ENCODE measurements at regions of chr21 and their contacts with region 1.

Region 1: GRCh38 chr21:44606495-44606894 is 5.4 kb upstream of the KRTAP10-8 start:
- DNase-seq: no peak
- H3K4me3 ChIP-seq: no peak overlapping the region
- H3K27ac ChIP-seq: no peak overlapping the region
- H3K4me1 ChIP-seq: no peaks in the 10 kb centered on the region
- H3K27me3 ChIP-seq: peaks cover 1 to 3% of the 10 kb centered on the region in 2 experiments
- CTCF ChIP-seq: no peak
- POLR2A ChIP-seq: no peak

Region 2: GRCh38 chr21:44564886-44565598 is 41.5 kb before region 1 on chr21:
- CTCF ChIA-PET with region 1: no interaction called
- POLR2A ChIA-PET with region 1: no interaction called
- dilution Hi-C with region 1: no loop called
- intact Hi-C with region 1: loop called (anchors 5 kb)
- DNase-seq: no peak
- H3K4me3 ChIP-seq: no peak overlapping the region
- H3K27ac ChIP-seq: no peak overlapping the region
- H3K4me1 ChIP-seq: no peaks in the 10 kb centered on the region
- H3K27me3 ChIP-seq: peaks cover 0 to 3% of the 10 kb centered on the region in 2 experiments
- CTCF ChIP-seq: no peak
- POLR2A ChIP-seq: no peak

Region 3: GRCh38 chr21:44593598-44594405 is 12.7 kb before region 1 on chr21:
- CTCF ChIA-PET with region 1: no interaction called
- POLR2A ChIA-PET with region 1: no interaction called
- dilution Hi-C with region 1: no loop called
- intact Hi-C with region 1: no loop called
- DNase-seq: no peak
- H3K4me3 ChIP-seq: no peak overlapping the region
- H3K27ac ChIP-seq: no peak overlapping the region
- H3K4me1 ChIP-seq: no peaks in the 10 kb centered on the region
- H3K27me3 ChIP-seq: peaks cover 0 to 2% of the 10 kb centered on the region in 2 experiments
- CTCF ChIP-seq: no peak
- POLR2A ChIP-seq: no peak

Region 4: DNA sequence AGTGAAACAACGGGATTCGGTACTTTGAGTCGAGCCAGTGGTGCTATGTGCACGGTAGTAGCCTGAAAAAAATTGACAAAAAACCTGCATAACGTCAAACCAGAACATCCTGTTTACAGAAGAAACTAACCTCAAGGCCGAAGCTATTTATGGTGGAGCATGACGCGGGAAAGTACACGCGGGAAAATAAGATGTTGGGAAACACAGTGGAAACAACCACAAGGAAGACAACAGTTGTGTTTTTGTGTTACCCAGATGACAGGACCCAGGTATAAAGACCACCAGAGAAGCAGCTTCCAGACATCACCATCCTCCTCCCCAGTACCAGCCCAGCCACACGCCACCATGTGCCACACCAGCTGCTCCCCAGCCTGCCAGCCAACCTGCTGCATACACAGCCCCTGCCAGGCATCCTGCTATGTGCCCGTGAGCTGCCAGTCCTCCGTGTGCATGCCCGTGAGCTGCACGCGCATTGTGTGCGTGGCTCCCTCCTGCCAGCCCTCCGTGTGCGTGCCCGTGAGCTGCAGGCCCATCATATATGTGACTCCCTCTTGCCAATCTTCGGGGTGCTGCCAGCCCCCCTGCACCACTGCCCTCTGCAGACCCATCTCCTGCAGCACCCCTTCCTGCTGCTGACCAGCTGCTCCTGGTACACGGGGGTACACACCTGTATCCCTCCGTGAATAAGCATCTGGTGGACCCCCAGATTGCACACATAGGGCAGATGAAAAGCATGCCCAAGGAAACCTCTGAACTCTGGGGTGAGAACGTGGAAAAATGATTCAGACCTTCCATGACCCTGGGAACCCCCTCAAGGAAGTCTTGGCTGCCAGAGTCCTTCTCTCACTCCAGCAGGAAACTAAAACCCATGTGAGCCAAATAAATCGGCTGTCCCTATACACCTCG is 51.4 kb after region 1 on chr21 and contains the start of gene KRTAP12-3:
- CTCF ChIA-PET with region 1: no interaction called
- POLR2A ChIA-PET with region 1: no interaction called
- dilution Hi-C with region 1: no loop called
- intact Hi-C with region 1: no loop called
- DNase-seq: no peak
- H3K4me3 ChIP-seq: no peak within 1 kb of the TSS
- H3K27ac ChIP-seq: no peak within 1 kb of the TSS
- H3K4me1 ChIP-seq: no peaks in the 10 kb centered on the region
- H3K27me3 ChIP-seq: peaks cover 0 to 4% of the 10 kb centered on the region in 2 experiments
- CTCF ChIP-seq: no peak
- POLR2A ChIP-seq: no peak
- total RNA-seq, gene KRTAP12-3: not detected in 2 replicates